ENCODE measurements at regions of chr2 and their contacts with region 1.

Region 1: GRCh38 chr2:20650880-20651730 is at the start of gene HS1BP3:
- DNase-seq: peak; percentile 89
- H3K4me3 Mint-ChIP-seq: peak within 1 kb of the TSS; percentile 83
- H3K27ac Mint-ChIP-seq: peak within 1 kb of the TSS; percentile 79
- H3K4me1 Mint-ChIP-seq: peaks cover 24% of the 10 kb centered on the region
- H3K27me3 Mint-ChIP-seq: no peaks in the 10 kb centered on the region
- total RNA-seq, gene HS1BP3: 10.1 to 10.4 TPM

Region 2: GRCh38 chr2:19901442-19902215 is 749.5 kb before region 1 on chr2 and contains the start of gene TTC32:
- CTCF ChIA-PET with region 1: no interaction called
- POLR2A ChIA-PET with region 1: no interaction called
- intact Hi-C with region 1: loop called (anchors 1 kb)
- DNase-seq: peak; percentile 95
- H3K4me3 Mint-ChIP-seq: peak within 1 kb of the TSS; percentile 83
- H3K27ac Mint-ChIP-seq: peak within 1 kb of the TSS; percentile 93
- H3K4me1 Mint-ChIP-seq: peaks cover 38% of the 10 kb centered on the region
- H3K27me3 Mint-ChIP-seq: peaks cover 2% of the 10 kb centered on the region
- total RNA-seq, gene TTC32: 14.2 to 17.3 TPM

Region 3: GRCh38 chr2:20411361-20411894 is 239.7 kb before region 1 on chr2:
- CTCF ChIA-PET with region 1: interaction called, 34 read pairs
- POLR2A ChIA-PET with region 1: no interaction called
- intact Hi-C with region 1: loop called (anchors 1 kb)
- DNase-seq: peak; percentile 83
- H3K4me3 Mint-ChIP-seq: no peak overlapping the region
- H3K27ac Mint-ChIP-seq: no peak overlapping the region
- H3K4me1 Mint-ChIP-seq: no peaks in the 10 kb centered on the region
- H3K27me3 Mint-ChIP-seq: no peaks in the 10 kb centered on the region

Region 4: GRCh38 chr2:20446917-20447436 is 204.1 kb before region 1 on chr2 and contains the start of gene RHOB:
- CTCF ChIA-PET with region 1: interaction called, 34 read pairs
- POLR2A ChIA-PET with region 1: interaction called, 35 read pairs
- intact Hi-C with region 1: loop called (anchors 1 kb)
- DNase-seq: peak; percentile 94
- H3K4me3 Mint-ChIP-seq: peak within 1 kb of the TSS; percentile 76
- H3K27ac Mint-ChIP-seq: peak within 1 kb of the TSS; percentile 23
- H3K4me1 Mint-ChIP-seq: peaks cover 10% of the 10 kb centered on the region
- H3K27me3 Mint-ChIP-seq: peaks cover 8% of the 10 kb centered on the region
- total RNA-seq, gene RHOB: 31.6 to 33.6 TPM

Region 5: GRCh38 chr2:20491731-20492531 is 159.2 kb before region 1 on chr2:
- CTCF ChIA-PET with region 1: no interaction called
- POLR2A ChIA-PET with region 1: no interaction called
- intact Hi-C with region 1: no loop called
- DNase-seq: no peak
- H3K4me3 Mint-ChIP-seq: no peak overlapping the region
- H3K27ac Mint-ChIP-seq: no peak overlapping the region
- H3K4me1 Mint-ChIP-seq: no peaks in the 10 kb centered on the region
- H3K27me3 Mint-ChIP-seq: no peaks in the 10 kb centered on the region

Region 6: GRCh38 chr2:20666304-20667150 is 15.4 kb after region 1 on chr2 and contains the start of gene GDF7:
- CTCF ChIA-PET with region 1: interaction called, 58 read pairs
- POLR2A ChIA-PET with region 1: interaction called, 3 read pairs
- intact Hi-C with region 1: no loop called
- DNase-seq: peak; percentile 38
- H3K4me3 Mint-ChIP-seq: peak within 1 kb of the TSS; percentile 65
- H3K27ac Mint-ChIP-seq: no peak within 1 kb of the TSS
- H3K4me1 Mint-ChIP-seq: peaks cover 9% of the 10 kb centered on the region
- H3K27me3 Mint-ChIP-seq: peaks cover 69% of the 10 kb centered on the region
- total RNA-seq, gene GDF7: 0.02 to 0.05 TPM

Region 7: DNA sequence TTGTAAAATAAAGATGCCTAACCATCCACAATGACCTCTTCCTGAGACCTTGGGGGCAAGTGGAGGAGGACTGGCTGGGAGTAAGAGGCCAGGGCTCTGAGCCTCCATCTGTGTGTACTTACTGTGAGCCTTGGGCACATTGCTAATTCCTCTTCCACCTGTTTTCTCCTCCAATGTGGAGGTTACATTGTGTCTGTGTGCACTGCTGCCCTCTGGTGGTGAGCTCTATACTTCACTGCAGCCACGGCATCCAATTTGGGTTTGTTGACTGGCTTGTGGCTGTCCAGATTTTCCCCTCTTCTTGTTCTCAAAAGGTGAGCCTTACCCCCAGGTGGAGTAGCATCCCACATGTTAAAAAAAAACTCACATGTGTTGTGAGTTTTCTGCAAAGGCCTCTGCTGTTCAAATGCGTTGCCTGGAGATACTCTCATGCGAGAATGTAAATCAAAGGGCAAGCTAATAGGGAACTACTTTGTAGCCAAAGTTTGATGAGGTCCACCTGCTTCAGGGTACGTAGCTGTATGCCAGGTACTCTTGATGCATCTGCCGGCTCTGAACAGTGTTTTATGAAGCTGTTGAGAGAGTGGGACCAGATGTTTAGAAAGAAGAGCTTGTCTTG is 311.9 kb after region 1 on chr2:
- CTCF ChIA-PET with region 1: interaction called, 16 read pairs
- POLR2A ChIA-PET with region 1: no interaction called
- intact Hi-C with region 1: no loop called
- DNase-seq: peak; percentile 78
- H3K4me3 Mint-ChIP-seq: no peak overlapping the region
- H3K27ac Mint-ChIP-seq: no peak overlapping the region
- H3K4me1 Mint-ChIP-seq: no peaks in the 10 kb centered on the region
- H3K27me3 Mint-ChIP-seq: peaks cover 10% of the 10 kb centered on the region

Region 8: GRCh38 chr2:21617885-21618434 is 966.9 kb after region 1 on chr2:
- CTCF ChIA-PET with region 1: no interaction called
- POLR2A ChIA-PET with region 1: no interaction called
- intact Hi-C with region 1: no loop called
- DNase-seq: no peak
- H3K4me3 Mint-ChIP-seq: no peak overlapping the region
- H3K27ac Mint-ChIP-seq: no peak overlapping the region
- H3K4me1 Mint-ChIP-seq: no peaks in the 10 kb centered on the region
- H3K27me3 Mint-ChIP-seq: no peaks in the 10 kb centered on the region

Measured in activated CD4-positive, alpha-beta memory T cell treated with anti-CD3 and anti-CD28 coated beads for 36 hours (primary cell).